HCT116 (cell line): ENCODE measurements at regions of chr10 and their contacts with region 1.

Region 1: GRCh38 chr10:92087750-92088395 is 164.3 kb downstream of the BTAF1 start:
- DNase-seq: peak; percentile 78
- ATAC-seq: peak; percentile 100
- H3K4me3 ChIP-seq: no peak overlapping the region
- H3K27ac ChIP-seq: no peak overlapping the region
- H3K4me1 ChIP-seq: peaks cover 3 to 11% of the 10 kb centered on the region in 2 experiments; a peak in 3 of 4 replicates
- H3K27me3 ChIP-seq: no peaks in the 10 kb centered on the region
- CTCF ChIP-seq: peak; percentile 77 to 97 (median 84)
- POLR2A ChIP-seq: no peak
- RAD21 ChIP-seq: peak; percentile 100

Region 2: GRCh38 chr10:91856637-91857036 is 231.2 kb before region 1 on chr10:
- CTCF ChIA-PET with region 1: no interaction called
- POLR2A ChIA-PET with region 1: no interaction called
- RAD21 ChIA-PET with region 1: no interaction called
- intact Hi-C with region 1: no loop called
- DNase-seq: peak; percentile 3
- ATAC-seq: no peak
- H3K4me3 ChIP-seq: no peak overlapping the region
- H3K27ac ChIP-seq: no peak overlapping the region
- H3K4me1 ChIP-seq: no peaks in the 10 kb centered on the region
- H3K27me3 ChIP-seq: no peaks in the 10 kb centered on the region
- CTCF ChIP-seq: peak; percentile 26 to 64 (median 55); a peak in 5 of 6 replicates
- POLR2A ChIP-seq: no peak
- RAD21 ChIP-seq: peak; percentile 48

Region 3: GRCh38 chr10:92066386-92066785 is 21.5 kb before region 1 on chr10:
- CTCF ChIA-PET with region 1: no interaction called
- POLR2A ChIA-PET with region 1: no interaction called
- RAD21 ChIA-PET with region 1: no interaction called
- intact Hi-C with region 1: no loop called
- DNase-seq: no peak
- ATAC-seq: no peak
- H3K4me3 ChIP-seq: no peak overlapping the region
- H3K27ac ChIP-seq: no peak overlapping the region
- H3K4me1 ChIP-seq: no peaks in the 10 kb centered on the region
- H3K27me3 ChIP-seq: no peaks in the 10 kb centered on the region
- CTCF ChIP-seq: no peak
- POLR2A ChIP-seq: no peak
- RAD21 ChIP-seq: no peak

Region 4: DNA sequence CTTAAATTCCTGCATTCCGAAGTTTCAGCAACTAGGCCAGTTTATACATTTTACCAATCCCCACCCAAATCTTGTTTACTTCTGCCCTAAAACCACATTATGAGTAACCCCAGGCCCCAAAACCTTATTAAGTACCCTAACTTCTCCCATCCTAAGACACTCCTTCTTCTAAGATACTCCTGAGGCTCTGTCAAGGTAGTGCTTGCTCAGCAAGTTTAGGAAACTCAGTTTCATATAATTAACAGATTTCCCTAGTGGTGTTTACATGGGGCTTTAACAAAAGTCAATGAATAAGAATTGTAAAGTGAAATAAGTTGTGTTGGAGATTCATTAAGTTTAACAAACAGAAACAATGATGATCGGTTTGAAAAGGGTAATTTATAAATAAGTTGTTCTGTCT is 125.2 kb after region 1 on chr10:
- CTCF ChIA-PET with region 1: interaction called, 6 read pairs
- POLR2A ChIA-PET with region 1: no interaction called
- RAD21 ChIA-PET with region 1: no interaction called
- intact Hi-C with region 1: loop called (anchors 5 kb)
- DNase-seq: no peak
- ATAC-seq: no peak
- H3K4me3 ChIP-seq: no peak overlapping the region
- H3K27ac ChIP-seq: no peak overlapping the region
- H3K4me1 ChIP-seq: peaks cover 30 to 94% of the 10 kb centered on the region in 2 experiments
- H3K27me3 ChIP-seq: no peaks in the 10 kb centered on the region
- CTCF ChIP-seq: no peak
- POLR2A ChIP-seq: no peak
- RAD21 ChIP-seq: no peak

Region 5: GRCh38 chr10:92240289-92241157 is 152.7 kb after region 1 on chr10:
- CTCF ChIA-PET with region 1: no interaction called
- POLR2A ChIA-PET with region 1: no interaction called
- RAD21 ChIA-PET with region 1: no interaction called
- intact Hi-C with region 1: no loop called
- DNase-seq: no peak
- ATAC-seq: peak; percentile 64
- H3K4me3 ChIP-seq: peak overlapping the region; percentile 50 to 59
- H3K27ac ChIP-seq: peak overlapping the region; percentile 20
- H3K4me1 ChIP-seq: peaks cover 12 to 40% of the 10 kb centered on the region in 2 experiments; a peak in 3 of 4 replicates
- H3K27me3 ChIP-seq: no peaks in the 10 kb centered on the region
- CTCF ChIP-seq: no peak
- POLR2A ChIP-seq: no peak
- RAD21 ChIP-seq: no peak; the same call in 1 of the 2 replicates

Region 6: GRCh38 chr10:92290837-92291615 is 203.2 kb after region 1 on chr10 and contains the starts of genes CPEB3 and MARCHF5:
- CTCF ChIA-PET with region 1: interaction called, 5 read pairs
- POLR2A ChIA-PET with region 1: no interaction called
- RAD21 ChIA-PET with region 1: interaction called in 1 of 2 experiments, 3 read pairs
- intact Hi-C with region 1: loop called (anchors 2 kb)
- DNase-seq: peak; percentile 91
- ATAC-seq: peak; percentile 97
- H3K4me3 ChIP-seq: peak within 1 kb of the TSS; percentile 94 to 97
- H3K27ac ChIP-seq: peak within 1 kb of the TSS; percentile 91
- H3K4me1 ChIP-seq: peaks cover 7 to 14% of the 10 kb centered on the region in 2 experiments
- H3K27me3 ChIP-seq: no peaks in the 10 kb centered on the region
- CTCF ChIP-seq: peak in 2 of 3 experiments; percentile 42 to 56; a peak in 4 of 6 replicates
- POLR2A ChIP-seq: no peak
- RAD21 ChIP-seq: peak; percentile 56
- total RNA-seq, gene CPEB3: 3.0 TPM
- total RNA-seq, gene MARCHF5: 59.1 TPM

Region 7: GRCh38 chr10:92517034-92517655 is 429.3 kb after region 1 on chr10:
- CTCF ChIA-PET with region 1: interaction called, 4 read pairs
- POLR2A ChIA-PET with region 1: no interaction called
- RAD21 ChIA-PET with region 1: no interaction called
- intact Hi-C with region 1: loop called (anchors 5 kb)
- DNase-seq: peak; percentile 64
- ATAC-seq: peak; percentile 96
- H3K4me3 ChIP-seq: no peak overlapping the region
- H3K27ac ChIP-seq: no peak overlapping the region
- H3K4me1 ChIP-seq: no peaks in the 10 kb centered on the region
- H3K27me3 ChIP-seq: no peaks in the 10 kb centered on the region
- CTCF ChIP-seq: peak; percentile 71 to 84 (median 73); a peak in 5 of 6 replicates
- POLR2A ChIP-seq: no peak
- RAD21 ChIP-seq: peak; percentile 77